Dorsolateral prefrontal cortex (tissue), 120 donors: ENCODE measurements at regions of chr22 and their contacts with region 1.

Region 1: GRCh38 chr22:29883045-29883774 is at the start of gene MTMR3:
- DNase-seq: peak; percentile 85 to 96 (median 92)
- H3K4me3 ChIP-seq: peak within 1 kb of the TSS; percentile 72 to 100 (median 93)
- H3K27ac ChIP-seq: peak within 1 kb of the TSS; percentile 73 to 99 (median 96)
- H3K27me3 ChIP-seq: no peaks in the 10 kb centered on the region
- CTCF ChIP-seq: peak in 51 of 56 donors; percentile 17 to 73 (median 47)
- total RNA-seq, gene MTMR3: 45.6 to 93.4 (median 62.5) TPM

Region 2: GRCh38 chr22:29603358-29604075 is 279.7 kb before region 1 on chr22 and contains the start of gene NF2:
- intact Hi-C with region 1: loop called in 1 of 2 experiments (anchors 10 kb)
- DNase-seq: peak; percentile 98 to 100 (median 100)
- H3K4me3 ChIP-seq: peak within 1 kb of the TSS; percentile 58 to 100 (median 96)
- H3K27ac ChIP-seq: peak within 1 kb of the TSS in 58 of 59 donors; percentile 58 to 98 (median 88)
- H3K27me3 ChIP-seq: no peaks in the 10 kb centered on the region
- CTCF ChIP-seq: peak in 32 of 56 donors; percentile 11 to 60 (median 30)
- total RNA-seq, gene NF2: 34.6 to 110 (median 73.5) TPM

Region 3: GRCh38 chr22:29837780-29838598 is 45.2 kb before region 1 on chr22 and contains the start of gene ASCC2:
- intact Hi-C with region 1: loop called in 1 of 2 experiments (anchors 5 kb)
- DNase-seq: peak; percentile 94 to 99 (median 97)
- H3K4me3 ChIP-seq: peak within 1 kb of the TSS; percentile 65 to 100 (median 94)
- H3K27ac ChIP-seq: peak within 1 kb of the TSS in 55 of 59 donors; percentile 2 to 90 (median 74)
- H3K27me3 ChIP-seq: no peaks in the 10 kb centered on the region
- CTCF ChIP-seq: peak in 36 of 56 donors; percentile 5 to 56 (median 29)
- total RNA-seq, gene ASCC2: 22.5 to 65.4 (median 35.4) TPM

Region 4: DNA sequence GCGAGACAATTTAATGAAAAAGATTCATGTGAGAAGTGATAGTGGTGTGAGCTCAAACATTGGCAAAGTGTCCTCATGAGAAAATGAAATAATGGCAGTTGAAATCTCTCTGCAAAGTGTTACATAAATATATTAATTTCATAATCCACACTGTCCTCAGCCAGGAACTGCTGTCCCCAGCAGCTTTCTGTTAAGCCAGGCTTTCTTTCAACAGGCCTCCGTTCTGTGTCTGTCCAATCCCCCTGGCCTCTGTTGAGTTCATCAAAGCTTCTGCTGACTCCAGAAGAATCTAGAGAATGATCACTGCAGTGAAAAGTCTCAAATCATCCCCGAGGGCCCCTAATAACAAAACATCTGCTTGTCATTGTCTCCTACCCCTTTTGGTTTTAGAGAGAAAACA is 35.1 kb before region 1 on chr22:
- intact Hi-C with region 1: no loop called
- DNase-seq: no peak
- H3K4me3 ChIP-seq: no peak overlapping the region
- H3K27ac ChIP-seq: no peak overlapping the region
- H3K27me3 ChIP-seq: no peaks in the 10 kb centered on the region
- CTCF ChIP-seq: no peak

Region 5: GRCh38 chr22:29994027-29994715 is 111.0 kb after region 1 on chr22:
- intact Hi-C with region 1: loop called in 1 of 2 experiments (anchors 10 kb)
- DNase-seq: no peak
- H3K4me3 ChIP-seq: no peak overlapping the region
- H3K27ac ChIP-seq: peak overlapping the region in 1 of 59 donors; percentile 2
- H3K27me3 ChIP-seq: no peaks in the 10 kb centered on the region
- CTCF ChIP-seq: no peak